ENCODE measurements at regions of chr10 and their contacts with region 1.

Region 1: GRCh38 chr10:33330543-33331378 is 3.7 kb downstream of the NRP1 start:
- DNase-seq: peak; percentile 73
- H3K4me3 ChIP-seq: peak overlapping the region; percentile 91 to 95 (median 91)
- H3K27ac ChIP-seq: peak overlapping the region; percentile 55
- H3K4me1 ChIP-seq: peaks cover 40% of the 10 kb centered on the region
- H3K27me3 ChIP-seq: no peaks in the 10 kb centered on the region
- CTCF ChIP-seq: peak; percentile 88 to 91

Region 2: DNA sequence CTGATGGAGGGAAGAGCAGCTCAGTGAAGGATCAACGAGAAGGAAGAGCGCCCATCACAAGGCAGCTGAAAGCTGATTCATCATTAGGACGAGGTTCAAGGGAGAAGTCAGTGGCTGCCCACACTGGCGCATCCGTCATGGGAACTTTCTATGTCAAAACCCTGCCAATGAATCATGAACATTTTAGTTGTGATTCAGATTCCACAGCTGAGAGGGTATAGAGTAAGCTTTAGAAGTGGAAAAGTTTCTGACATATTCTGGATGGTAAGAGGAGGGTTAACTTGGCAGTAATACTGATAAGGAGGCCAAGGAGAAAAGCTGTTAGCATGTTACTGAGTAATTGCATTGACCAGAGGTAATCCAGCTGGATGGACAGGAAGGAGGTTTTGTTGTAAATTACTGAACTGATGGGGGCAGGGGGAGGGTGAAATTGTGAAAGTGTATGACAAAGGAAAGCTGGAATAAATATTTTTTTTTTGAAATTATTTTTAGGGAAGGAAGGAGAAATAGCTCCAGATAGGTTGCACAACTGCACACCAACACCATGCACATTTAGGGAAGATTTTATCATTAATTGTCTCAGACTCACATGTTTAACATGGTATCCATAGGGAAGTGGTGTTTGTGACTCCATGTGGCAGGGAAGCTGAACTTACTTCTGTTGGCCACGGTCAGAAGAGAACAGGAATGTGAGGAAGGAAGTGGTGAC is 82.0 kb after region 1 on chr10:
- CTCF ChIA-PET with region 1: no interaction called
- dilution Hi-C with region 1: no loop called
- in situ Hi-C with region 1: no loop called
- intact Hi-C with region 1: loop called (anchors 5 kb)
- DNase-seq: peak; percentile 85
- H3K4me3 ChIP-seq: no peak overlapping the region
- H3K27ac ChIP-seq: no peak overlapping the region
- H3K4me1 ChIP-seq: peaks cover 11% of the 10 kb centered on the region
- H3K27me3 ChIP-seq: no peaks in the 10 kb centered on the region
- CTCF ChIP-seq: no peak

Region 3: GRCh38 chr10:33559105-33559504 is 228.3 kb after region 1 on chr10:
- CTCF ChIA-PET with region 1: interaction called, 3 read pairs
- dilution Hi-C with region 1: no loop called
- in situ Hi-C with region 1: no loop called
- intact Hi-C with region 1: loop called (anchors 2 kb)
- DNase-seq: peak; percentile 75
- H3K4me3 ChIP-seq: no peak overlapping the region
- H3K27ac ChIP-seq: no peak overlapping the region
- H3K4me1 ChIP-seq: peaks cover 11% of the 10 kb centered on the region
- H3K27me3 ChIP-seq: no peaks in the 10 kb centered on the region
- CTCF ChIP-seq: peak in 1 of 2 donors; percentile 30

Region 4: GRCh38 chr10:33706191-33706590 is 375.4 kb after region 1 on chr10:
- CTCF ChIA-PET with region 1: no interaction called
- dilution Hi-C with region 1: no loop called
- in situ Hi-C with region 1: no loop called
- intact Hi-C with region 1: loop called (anchors 5 kb)
- DNase-seq: peak; percentile 82
- H3K4me3 ChIP-seq: no peak overlapping the region
- H3K27ac ChIP-seq: peak overlapping the region; percentile 17
- H3K4me1 ChIP-seq: peaks cover 35% of the 10 kb centered on the region
- H3K27me3 ChIP-seq: no peaks in the 10 kb centered on the region
- CTCF ChIP-seq: no peak

Region 5: DNA sequence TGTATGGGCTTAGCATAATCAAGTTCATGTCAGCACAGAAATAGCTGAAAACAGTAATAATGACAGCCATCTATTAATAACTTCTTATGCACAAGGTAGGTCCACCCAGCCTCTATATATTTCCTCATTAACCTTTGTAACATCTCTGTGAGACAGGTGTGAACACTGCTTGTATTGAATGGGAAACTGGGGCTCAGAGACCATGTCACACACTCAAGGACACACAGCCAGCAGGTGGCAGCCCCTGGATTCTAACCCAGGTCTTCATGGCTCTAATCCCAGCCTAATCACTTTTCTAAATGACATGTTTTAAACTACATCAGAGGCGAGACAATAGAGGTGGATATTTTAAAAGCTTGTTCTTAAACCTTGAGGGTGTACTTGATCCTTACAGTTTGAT is 892.9 kb after region 1 on chr10:
- CTCF ChIA-PET with region 1: no interaction called
- dilution Hi-C with region 1: no loop called
- in situ Hi-C with region 1: no loop called
- intact Hi-C with region 1: loop called (anchors 5 kb)
- DNase-seq: no peak
- H3K4me3 ChIP-seq: no peak overlapping the region
- H3K27ac ChIP-seq: no peak overlapping the region
- H3K4me1 ChIP-seq: peaks cover 5% of the 10 kb centered on the region
- H3K27me3 ChIP-seq: no peaks in the 10 kb centered on the region
- CTCF ChIP-seq: peak in 1 of 2 donors; percentile 12

Region 6: GRCh38 chr10:34655286-34656170 is 1324.8 kb after region 1 on chr10:
- CTCF ChIA-PET with region 1: no interaction called
- dilution Hi-C with region 1: no loop called
- in situ Hi-C with region 1: loop called in 1 of 2 experiments (anchors 10 kb)
- intact Hi-C with region 1: no loop called
- DNase-seq: peak; percentile 42
- H3K4me3 ChIP-seq: no peak overlapping the region
- H3K27ac ChIP-seq: no peak overlapping the region
- H3K4me1 ChIP-seq: peaks cover 9% of the 10 kb centered on the region
- H3K27me3 ChIP-seq: no peaks in the 10 kb centered on the region
- CTCF ChIP-seq: peak; percentile 62 to 76